ENCODE measurements at regions of chr5 and their contacts with region 1.

Region 1: DNA sequence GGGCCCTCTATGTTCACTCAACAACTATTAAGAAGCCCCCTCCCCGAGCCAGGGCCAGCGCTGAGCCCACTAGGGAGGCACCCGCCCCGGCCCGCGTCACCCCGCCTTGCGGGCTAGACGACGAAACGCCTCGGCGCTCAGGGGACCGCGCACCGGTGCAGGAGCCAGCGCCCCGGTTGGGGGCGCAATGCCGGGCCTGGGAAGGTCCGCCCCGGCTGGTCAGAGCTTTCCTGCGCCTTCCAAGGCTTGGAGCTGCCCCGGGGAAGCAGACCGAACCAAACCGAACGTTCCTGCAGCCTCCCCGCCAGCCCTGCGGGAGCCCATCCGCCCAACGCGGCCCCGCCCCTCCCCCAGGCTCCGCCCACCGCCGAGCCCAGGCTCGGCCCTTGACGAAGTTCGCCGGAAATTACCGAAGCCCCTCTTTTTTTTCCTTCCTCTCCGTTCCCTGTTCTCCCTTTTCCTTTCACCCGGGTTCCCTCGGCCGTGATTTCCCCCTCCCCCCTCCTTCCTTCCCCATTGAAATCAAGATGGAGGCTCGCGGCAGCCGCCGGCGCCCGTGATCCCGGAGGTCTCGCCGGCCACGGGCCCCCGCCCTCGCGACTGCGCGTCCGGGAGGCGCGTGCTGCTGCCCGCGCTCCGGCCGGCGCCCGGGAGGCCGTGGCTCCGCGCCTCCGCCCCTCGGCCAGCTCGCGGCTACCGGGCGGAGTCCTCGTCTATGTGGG is at the start of gene TRIO:
- DNase-seq: peak; percentile 93 to 98 (median 97)
- H3K4me3 ChIP-seq: peak within 1 kb of the TSS; percentile 78
- H3K27ac ChIP-seq: peak within 1 kb of the TSS; percentile 96 to 97
- H3K4me1 ChIP-seq: peaks cover 11% of the 10 kb centered on the region
- H3K27me3 ChIP-seq: no peaks in the 10 kb centered on the region
- CTCF ChIP-seq: peak; percentile 42 to 49 (median 46)
- EP300 ChIP-seq: no peak
- POLR2A ChIP-seq: peak; percentile 41
- total RNA-seq, gene TRIO: 93.3 to 268 (median 132) TPM

Region 2: GRCh38 chr5:13831351-13831750 is 311.6 kb before region 1 on chr5:
- intact Hi-C with region 1: no loop called
- DNase-seq: no peak
- H3K4me3 ChIP-seq: no peak overlapping the region
- H3K27ac ChIP-seq: no peak overlapping the region
- H3K4me1 ChIP-seq: no peaks in the 10 kb centered on the region
- H3K27me3 ChIP-seq: no peaks in the 10 kb centered on the region
- CTCF ChIP-seq: no peak
- EP300 ChIP-seq: no peak
- POLR2A ChIP-seq: no peak

Region 3: DNA sequence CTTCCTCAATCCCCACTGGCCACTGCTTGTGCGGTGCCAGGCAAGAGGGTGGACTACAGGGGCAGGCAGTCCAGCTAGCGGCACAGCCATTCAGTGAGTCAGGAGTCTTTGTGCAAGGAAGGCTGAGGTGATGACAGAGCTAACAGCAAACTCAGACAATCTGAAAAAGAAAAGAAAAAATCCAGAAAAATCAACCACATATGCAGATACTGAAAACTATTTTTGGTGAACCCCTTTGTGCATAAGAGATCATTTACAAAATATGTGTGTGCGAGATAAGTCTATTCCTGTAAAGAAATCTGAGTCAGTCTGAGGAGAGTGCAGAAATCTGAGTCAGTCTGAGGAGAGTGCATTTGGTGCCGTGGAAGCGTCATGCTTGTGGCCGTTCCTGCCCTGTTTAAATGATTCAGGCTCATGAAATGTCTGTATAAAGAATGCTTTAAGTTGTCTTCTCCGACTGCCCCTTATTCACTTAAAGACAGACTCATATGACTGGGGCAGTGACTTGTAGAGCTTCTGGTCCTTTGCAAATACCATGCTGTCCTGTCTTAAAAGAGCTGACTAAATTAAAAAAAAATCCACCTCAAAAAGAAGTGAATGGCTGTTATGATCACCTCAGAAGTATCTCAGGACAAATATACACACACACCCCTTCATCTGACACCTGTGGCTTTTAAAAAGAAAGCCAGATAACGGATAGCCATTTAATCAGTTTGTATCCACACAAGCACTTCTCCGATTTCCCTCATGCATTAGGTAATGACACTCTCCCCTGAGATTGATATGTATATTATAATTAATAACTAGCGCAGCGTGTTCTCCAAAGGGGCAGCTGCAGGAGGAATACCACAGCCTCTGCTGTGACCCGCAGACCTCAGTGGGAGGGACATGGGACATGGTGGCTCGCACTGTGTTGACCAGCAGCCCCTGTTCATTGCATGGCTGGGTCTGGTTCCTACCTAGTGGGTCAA is 47.5 kb after region 1 on chr5:
- intact Hi-C with region 1: loop called in 1 of 4 experiments (anchors 10 kb)
- DNase-seq: no peak
- H3K4me3 ChIP-seq: no peak overlapping the region
- H3K27ac ChIP-seq: peak overlapping the region in 1 of 2 donors; percentile 22
- H3K4me1 ChIP-seq: peaks cover 17% of the 10 kb centered on the region
- H3K27me3 ChIP-seq: no peaks in the 10 kb centered on the region
- CTCF ChIP-seq: no peak
- EP300 ChIP-seq: no peak
- POLR2A ChIP-seq: no peak

Region 4: GRCh38 chr5:14208071-14209021 is 65.4 kb after region 1 on chr5:
- intact Hi-C with region 1: loop called in 2 of 4 experiments (anchors 10 kb)
- DNase-seq: peak in 1 of 5 donors; percentile 38
- H3K4me3 ChIP-seq: peak overlapping the region; percentile 4
- H3K27ac ChIP-seq: peak overlapping the region in 1 of 2 donors; percentile 46
- H3K4me1 ChIP-seq: peaks cover 19% of the 10 kb centered on the region
- H3K27me3 ChIP-seq: no peaks in the 10 kb centered on the region
- CTCF ChIP-seq: no peak
- EP300 ChIP-seq: no peak
- POLR2A ChIP-seq: no peak

Region 5: GRCh38 chr5:14258840-14259239 is 115.9 kb after region 1 on chr5:
- intact Hi-C with region 1: loop called in 2 of 4 experiments (anchors 5 to 10 kb)
- DNase-seq: peak in 1 of 5 donors; percentile 54
- H3K4me3 ChIP-seq: no peak overlapping the region
- H3K27ac ChIP-seq: peak overlapping the region in 1 of 2 donors; percentile 1
- H3K4me1 ChIP-seq: peaks cover 18% of the 10 kb centered on the region
- H3K27me3 ChIP-seq: no peaks in the 10 kb centered on the region
- CTCF ChIP-seq: peak in 1 of 3 donors; percentile 17
- EP300 ChIP-seq: no peak
- POLR2A ChIP-seq: no peak

Region 6: GRCh38 chr5:14264604-14265316 is 121.8 kb after region 1 on chr5:
- intact Hi-C with region 1: loop called in 3 of 4 experiments (anchors 5 to 10 kb)
- DNase-seq: peak; percentile 89 to 94 (median 94)
- H3K4me3 ChIP-seq: peak overlapping the region; percentile 1
- H3K27ac ChIP-seq: peak overlapping the region in 1 of 2 donors; percentile 38
- H3K4me1 ChIP-seq: peaks cover 21% of the 10 kb centered on the region
- H3K27me3 ChIP-seq: no peaks in the 10 kb centered on the region
- CTCF ChIP-seq: no peak
- EP300 ChIP-seq: no peak
- POLR2A ChIP-seq: peak; percentile 50

Measured in ovary (tissue), 10 donors.